ENCODE measurements at regions of chr7 and their contacts with region 1.

Region 1: DNA sequence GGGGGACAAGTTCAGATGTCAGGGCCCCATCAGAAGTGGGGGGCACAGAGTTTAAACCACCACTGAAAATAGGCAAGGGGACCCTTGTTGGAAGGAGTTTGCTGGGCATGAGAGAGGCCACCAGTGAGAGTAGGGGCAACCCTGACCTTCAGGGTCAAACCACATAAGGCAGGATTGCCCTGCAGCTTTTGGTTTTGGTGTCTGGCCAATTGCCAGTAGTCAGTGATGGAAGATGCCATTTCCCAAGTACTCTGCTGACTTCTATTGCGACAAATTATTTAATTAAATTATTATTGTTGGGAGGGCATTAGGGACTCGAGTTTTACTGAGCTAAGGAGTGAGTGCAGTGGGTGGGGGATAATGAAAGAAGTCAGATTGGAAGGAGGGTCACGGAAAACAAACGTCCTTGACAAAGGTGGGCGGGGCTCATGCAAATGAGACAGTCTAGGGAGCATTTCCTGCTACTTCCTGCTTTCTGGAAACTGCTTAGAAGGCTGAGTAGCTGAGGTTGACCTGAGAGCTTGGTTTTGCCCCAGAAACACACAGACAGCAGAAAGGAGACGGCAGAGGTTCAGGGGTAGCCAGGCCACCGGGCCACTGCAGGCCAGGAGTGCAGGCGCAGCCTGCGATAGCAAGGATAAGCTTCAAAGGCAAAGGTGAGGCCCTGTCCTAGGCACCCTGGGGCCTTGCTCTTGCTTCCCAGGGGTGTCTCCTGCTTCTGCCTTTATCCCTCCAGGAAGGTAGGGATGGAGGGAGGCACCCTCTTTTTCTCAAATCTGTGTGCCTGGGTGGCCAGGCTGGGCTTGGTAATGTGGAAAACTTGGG is 74.1 kb upstream of the ANLN start:
- DNase-seq: peak in 1 of 3 donors; percentile 28
- ATAC-seq: peak in 1 of 2 donors; percentile 47
- H3K4me3 ChIP-seq: no peak overlapping the region
- H3K27ac ChIP-seq: no peak overlapping the region
- H3K4me1 ChIP-seq: no peaks in the 10 kb centered on the region
- H3K27me3 ChIP-seq: no peaks in the 10 kb centered on the region

Region 2: DNA sequence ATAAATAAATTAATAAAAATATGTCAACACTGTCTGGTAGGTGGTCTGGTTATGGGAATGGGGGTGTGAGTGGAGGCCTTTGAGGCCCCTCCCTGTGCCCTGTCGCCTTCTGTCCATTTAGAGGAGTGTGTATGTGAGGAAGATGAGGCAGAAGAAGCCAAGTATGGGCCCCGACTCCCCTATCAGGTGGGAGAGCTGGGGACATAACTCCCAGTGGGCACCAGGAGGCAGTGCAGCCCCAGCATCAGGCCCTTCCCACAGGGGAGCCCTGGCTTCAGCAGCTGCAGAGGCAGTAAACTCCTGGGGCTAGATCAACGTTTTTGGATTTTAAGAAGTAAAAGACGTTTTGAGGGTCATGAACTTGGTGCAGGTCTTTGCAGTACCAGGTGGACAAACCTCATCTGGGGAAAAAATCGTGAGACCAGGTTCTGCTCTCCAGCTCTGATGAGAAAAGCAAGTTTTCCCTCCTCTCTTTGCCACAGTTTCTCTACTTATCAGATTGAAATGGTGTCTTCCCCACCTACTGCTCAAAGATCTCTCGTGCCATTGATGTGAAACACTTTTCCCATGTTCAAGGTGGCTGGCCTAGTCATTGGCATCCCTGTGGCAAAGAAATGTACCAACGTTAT is 330.3 kb before region 1 on chr7:
- intact Hi-C with region 1: loop called in 2 of 4 experiments (anchors 5 kb)
- DNase-seq: peak; percentile 83 to 93 (median 92)
- ATAC-seq: peak; percentile 92 to 95
- H3K4me3 ChIP-seq: no peak overlapping the region
- H3K27ac ChIP-seq: no peak overlapping the region
- H3K4me1 ChIP-seq: no peaks in the 10 kb centered on the region
- H3K27me3 ChIP-seq: no peaks in the 10 kb centered on the region

Region 3: GRCh38 chr7:36180121-36180520 is 135.4 kb before region 1 on chr7:
- intact Hi-C with region 1: no loop called
- DNase-seq: no peak
- ATAC-seq: no peak
- H3K4me3 ChIP-seq: no peak overlapping the region
- H3K27ac ChIP-seq: no peak overlapping the region
- H3K4me1 ChIP-seq: peaks cover 6% of the 10 kb centered on the region
- H3K27me3 ChIP-seq: no peaks in the 10 kb centered on the region

Region 4: DNA sequence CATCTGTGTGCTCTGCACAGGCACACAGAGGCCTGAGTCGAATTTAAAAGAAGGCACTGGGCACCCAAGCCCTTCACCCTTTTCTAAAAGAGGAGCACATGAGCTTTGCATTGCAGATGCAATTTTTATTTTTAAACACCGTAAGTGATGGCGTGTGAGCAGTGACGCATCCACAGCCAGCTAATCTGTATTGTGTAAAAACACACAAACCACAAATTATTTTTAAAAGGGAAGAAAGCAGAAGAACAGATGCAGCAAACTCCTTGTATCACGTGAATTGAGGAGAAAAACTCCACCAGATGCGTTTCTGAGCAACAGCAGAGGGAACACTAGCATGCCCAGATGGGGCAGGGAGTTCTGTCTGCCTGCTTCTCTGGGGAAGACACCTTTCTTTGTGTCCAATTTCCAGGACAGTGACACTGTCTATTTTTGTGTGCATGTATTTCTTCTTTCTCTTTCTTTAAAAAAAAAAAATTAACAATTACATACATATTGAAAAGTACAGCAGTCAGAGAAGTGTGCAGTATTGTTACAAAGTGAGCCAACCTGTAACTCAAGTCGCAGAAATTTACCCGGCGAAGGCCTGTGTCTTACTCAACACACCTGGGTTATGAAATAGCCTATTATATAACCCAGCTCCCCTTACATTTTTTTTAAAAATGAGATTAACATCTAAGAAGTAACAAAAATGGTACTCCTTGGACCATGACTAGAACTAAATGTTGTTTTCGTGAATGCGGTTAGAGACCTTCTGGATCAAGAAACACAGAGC is 123.3 kb before region 1 on chr7:
- intact Hi-C with region 1: no loop called
- DNase-seq: peak in 1 of 3 donors; percentile 56
- ATAC-seq: peak; percentile 26 to 31
- H3K4me3 ChIP-seq: no peak overlapping the region
- H3K27ac ChIP-seq: no peak overlapping the region
- H3K4me1 ChIP-seq: peaks cover 4% of the 10 kb centered on the region
- H3K27me3 ChIP-seq: no peaks in the 10 kb centered on the region

Region 5: DNA sequence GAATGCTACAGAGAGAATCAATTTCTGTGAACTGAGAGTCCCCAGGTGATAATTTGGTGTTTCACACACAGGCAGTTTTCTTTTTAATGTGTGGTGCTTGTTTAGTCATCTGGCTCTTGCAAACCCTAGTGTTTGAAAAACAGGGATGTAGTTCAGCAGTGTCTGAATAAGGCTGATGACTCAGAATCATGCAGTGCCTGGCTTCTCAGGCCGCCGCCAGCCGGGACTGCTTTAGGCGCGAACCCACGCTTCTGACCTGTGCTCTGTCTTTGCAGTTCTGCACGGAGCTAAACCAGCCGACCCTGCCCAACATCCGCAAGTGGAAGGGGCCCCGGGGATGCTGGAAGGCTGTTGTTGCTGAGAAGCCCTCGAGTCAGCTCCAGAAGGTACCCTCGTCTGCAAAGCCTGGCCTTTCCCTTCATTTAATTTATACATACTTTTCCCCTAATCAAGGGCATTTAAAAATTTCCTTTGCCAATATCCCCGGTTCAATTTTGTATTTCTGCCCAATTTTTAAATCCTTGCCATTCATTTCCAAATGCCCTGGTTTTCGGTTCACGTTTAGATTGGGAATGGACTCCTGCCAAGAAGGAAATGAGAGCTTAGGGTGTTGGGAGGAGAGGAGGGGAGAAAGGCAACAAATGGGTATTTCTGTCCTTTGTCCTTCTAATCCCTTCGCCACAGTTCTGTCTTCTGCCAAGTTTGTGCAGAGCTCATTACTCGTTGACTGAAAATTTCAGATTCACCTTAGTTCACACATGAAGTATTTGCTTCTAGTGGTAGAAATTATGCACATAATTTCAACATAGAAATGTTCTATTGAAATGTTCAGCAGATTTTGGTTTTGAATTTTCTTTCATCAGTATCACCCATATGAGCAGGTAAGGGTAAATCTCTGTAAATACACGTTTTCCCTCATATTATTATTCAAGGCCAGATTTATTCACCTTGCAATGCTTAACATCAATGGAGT is 34.4 kb before region 1 on chr7:
- intact Hi-C with region 1: no loop called
- DNase-seq: peak; percentile 60 to 84 (median 72)
- ATAC-seq: peak; percentile 78 to 80
- H3K4me3 ChIP-seq: no peak overlapping the region
- H3K27ac ChIP-seq: peak overlapping the region; percentile 8
- H3K4me1 ChIP-seq: peaks cover 8% of the 10 kb centered on the region
- H3K27me3 ChIP-seq: no peaks in the 10 kb centered on the region

Region 6: DNA sequence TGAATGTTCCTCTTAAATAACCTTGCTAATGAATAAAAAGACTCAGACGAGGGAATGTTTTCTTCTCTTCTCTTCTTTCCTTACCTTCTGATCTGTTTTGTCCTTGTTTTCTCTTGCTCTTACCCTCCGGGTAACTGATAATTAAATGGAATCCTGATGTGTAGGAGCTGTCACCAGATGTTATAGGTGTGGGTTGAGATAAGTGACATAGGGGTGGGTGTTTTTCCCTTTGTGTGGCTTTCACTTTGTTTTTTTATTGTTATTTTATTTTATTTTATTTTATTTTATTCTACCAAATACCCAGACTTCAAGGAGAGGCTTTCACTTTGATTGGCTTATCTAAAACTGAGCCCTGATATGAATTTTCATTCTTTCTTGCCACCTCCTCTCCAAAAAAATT is 99.6 kb after region 1 on chr7:
- intact Hi-C with region 1: no loop called
- DNase-seq: no peak
- ATAC-seq: no peak
- H3K4me3 ChIP-seq: no peak overlapping the region
- H3K27ac ChIP-seq: no peak overlapping the region
- H3K4me1 ChIP-seq: no peaks in the 10 kb centered on the region
- H3K27me3 ChIP-seq: no peaks in the 10 kb centered on the region